A549 (cell line): ENCODE measurements at regions of chr17 and their contacts with region 1.

Region 1: GRCh38 chr17:21284319-21285163 is at the start of gene MAP2K3:
- DNase-seq: peak; percentile 98 to 100
- ATAC-seq: peak; percentile 46 to 75
- H3K4me3 ChIP-seq: peak within 1 kb of the TSS; percentile 78
- H3K27ac ChIP-seq: peak within 1 kb of the TSS; percentile 76 to 89
- H3K4me1 ChIP-seq: peaks cover 52% of the 10 kb centered on the region
- CTCF ChIP-seq: no peak
- EP300 ChIP-seq: no peak
- POLR2A ChIP-seq: peak; percentile 94
- RAD21 ChIP-seq: no peak
- polyA plus RNA-seq, gene MAP2K3: 13.9 and 25.0 TPM in 2 replicates

Region 2: GRCh38 chr17:21252796-21253645 is 31.5 kb before region 1 on chr17 and contains the start of gene NATD1:
- CTCF ChIA-PET with region 1: interaction called, 15 read pairs
- POLR2A ChIA-PET with region 1: interaction called, 5 read pairs
- DNase-seq: peak; percentile 88 to 93
- ATAC-seq: peak; percentile 63 to 77
- H3K4me3 ChIP-seq: peak within 1 kb of the TSS; percentile 77
- H3K27ac ChIP-seq: peak within 1 kb of the TSS; percentile 52 to 77
- H3K4me1 ChIP-seq: peaks cover 10% of the 10 kb centered on the region
- CTCF ChIP-seq: no peak
- EP300 ChIP-seq: no peak
- POLR2A ChIP-seq: no peak
- RAD21 ChIP-seq: no peak
- polyA plus RNA-seq, gene NATD1: 1.1 and 1.5 TPM in 2 replicates

Region 3: DNA sequence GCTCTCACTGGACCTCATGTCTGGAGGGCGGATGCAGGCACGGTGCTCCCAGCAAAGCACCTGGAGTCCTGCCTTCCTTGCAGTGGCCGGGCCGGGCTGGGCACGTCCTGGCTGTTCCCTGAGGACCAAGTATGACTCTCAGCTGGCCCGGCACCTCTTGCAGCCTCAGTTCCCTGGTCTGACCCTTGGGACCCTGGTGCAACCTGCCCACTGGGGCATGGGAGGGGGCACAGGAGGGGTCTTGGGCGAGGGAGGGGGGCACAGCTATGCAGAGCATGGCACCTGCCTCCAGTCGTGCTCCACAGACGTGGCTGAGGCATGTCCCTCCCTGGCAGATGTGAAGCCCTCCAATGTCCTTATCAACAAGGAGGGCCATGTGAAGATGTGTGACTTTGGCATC is 19.6 kb after region 1 on chr17:
- CTCF ChIA-PET with region 1: interaction called, 14 read pairs
- POLR2A ChIA-PET with region 1: no interaction called
- DNase-seq: no peak
- ATAC-seq: no peak
- H3K4me3 ChIP-seq: no peak overlapping the region
- H3K27ac ChIP-seq: no peak overlapping the region
- H3K4me1 ChIP-seq: no peaks in the 10 kb centered on the region
- CTCF ChIP-seq: no peak
- EP300 ChIP-seq: no peak
- POLR2A ChIP-seq: no peak
- RAD21 ChIP-seq: no peak

Region 4: GRCh38 chr17:21376081-21376758 is 91.7 kb after region 1 on chr17 and contains the start of gene KCNJ12:
- CTCF ChIA-PET with region 1: interaction called, 20 read pairs
- POLR2A ChIA-PET with region 1: no interaction called
- DNase-seq: no peak
- ATAC-seq: peak; percentile 33 to 38; a peak in 5 of 6 replicates
- H3K4me3 ChIP-seq: peak within 1 kb of the TSS; percentile 52
- H3K27ac ChIP-seq: peak within 1 kb of the TSS; percentile 62 to 85
- H3K4me1 ChIP-seq: peaks cover 4% of the 10 kb centered on the region; the same call in 1 of the 3 replicates
- CTCF ChIP-seq: no peak
- EP300 ChIP-seq: no peak
- POLR2A ChIP-seq: peak; percentile 15; the same call in 1 of the 2 replicates
- RAD21 ChIP-seq: no peak
- polyA plus RNA-seq, gene KCNJ12: 0.34 and 0.38 TPM in 2 replicates

Region 5: DNA sequence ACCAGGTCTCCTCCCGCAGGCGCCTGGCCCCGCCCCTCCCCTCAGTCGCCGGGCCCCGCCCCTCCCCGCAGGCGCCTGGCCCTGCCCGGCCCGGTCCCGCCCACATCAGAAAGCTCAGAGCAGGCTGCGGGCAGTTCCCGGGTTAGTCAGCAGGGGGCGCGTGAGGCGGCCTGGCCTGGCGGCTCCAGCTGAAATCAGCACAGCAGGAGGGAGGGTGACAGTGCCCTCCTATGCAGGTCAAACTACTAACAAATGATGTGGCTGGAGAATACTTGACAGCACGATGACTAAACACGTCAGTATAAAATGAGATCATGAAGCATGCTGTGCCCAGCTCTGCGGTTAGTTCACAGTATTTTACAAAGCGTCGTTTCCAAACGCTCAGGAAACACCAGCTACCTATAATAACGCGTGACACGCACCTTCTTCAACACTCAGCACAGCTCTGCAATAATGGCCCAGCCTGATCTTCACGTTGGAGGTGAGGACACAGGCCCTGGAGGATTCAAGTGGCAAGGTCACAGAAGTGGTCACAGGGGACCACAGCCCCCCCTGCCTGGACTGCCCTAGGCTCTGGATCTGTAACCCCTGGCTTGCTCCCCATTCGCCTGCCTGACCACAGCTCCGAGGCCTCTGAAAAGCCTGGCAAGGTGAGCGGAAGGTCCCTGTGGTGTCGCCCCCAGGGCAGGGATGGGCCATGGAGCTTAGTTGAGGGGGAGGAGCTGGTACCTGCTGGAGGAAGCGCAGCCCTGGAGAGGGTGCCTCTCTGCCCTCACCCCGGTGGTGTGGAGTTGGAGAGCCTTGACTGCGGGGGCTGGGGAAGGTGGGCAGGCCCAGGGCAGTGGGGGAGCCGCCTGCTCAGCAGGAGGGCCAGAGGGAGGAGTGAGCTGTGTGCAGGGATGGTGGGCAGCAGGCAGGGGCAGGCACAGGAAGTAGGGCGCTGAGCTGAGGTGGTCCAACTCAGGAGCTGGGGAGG is 172.8 kb after region 1 on chr17:
- CTCF ChIA-PET with region 1: interaction called, 20 read pairs
- POLR2A ChIA-PET with region 1: interaction called, 3 read pairs
- DNase-seq: peak; percentile 80 to 87
- ATAC-seq: peak; percentile 80 to 91
- H3K4me3 ChIP-seq: no peak overlapping the region
- H3K27ac ChIP-seq: no peak overlapping the region
- H3K4me1 ChIP-seq: peaks cover 6% of the 10 kb centered on the region; the same call in 1 of the 3 replicates
- CTCF ChIP-seq: peak; percentile 91
- EP300 ChIP-seq: no peak
- POLR2A ChIP-seq: no peak
- RAD21 ChIP-seq: peak; percentile 65 to 77